ENCODE measurements at regions of chr1 and their contacts with region 1.

Region 1: DNA sequence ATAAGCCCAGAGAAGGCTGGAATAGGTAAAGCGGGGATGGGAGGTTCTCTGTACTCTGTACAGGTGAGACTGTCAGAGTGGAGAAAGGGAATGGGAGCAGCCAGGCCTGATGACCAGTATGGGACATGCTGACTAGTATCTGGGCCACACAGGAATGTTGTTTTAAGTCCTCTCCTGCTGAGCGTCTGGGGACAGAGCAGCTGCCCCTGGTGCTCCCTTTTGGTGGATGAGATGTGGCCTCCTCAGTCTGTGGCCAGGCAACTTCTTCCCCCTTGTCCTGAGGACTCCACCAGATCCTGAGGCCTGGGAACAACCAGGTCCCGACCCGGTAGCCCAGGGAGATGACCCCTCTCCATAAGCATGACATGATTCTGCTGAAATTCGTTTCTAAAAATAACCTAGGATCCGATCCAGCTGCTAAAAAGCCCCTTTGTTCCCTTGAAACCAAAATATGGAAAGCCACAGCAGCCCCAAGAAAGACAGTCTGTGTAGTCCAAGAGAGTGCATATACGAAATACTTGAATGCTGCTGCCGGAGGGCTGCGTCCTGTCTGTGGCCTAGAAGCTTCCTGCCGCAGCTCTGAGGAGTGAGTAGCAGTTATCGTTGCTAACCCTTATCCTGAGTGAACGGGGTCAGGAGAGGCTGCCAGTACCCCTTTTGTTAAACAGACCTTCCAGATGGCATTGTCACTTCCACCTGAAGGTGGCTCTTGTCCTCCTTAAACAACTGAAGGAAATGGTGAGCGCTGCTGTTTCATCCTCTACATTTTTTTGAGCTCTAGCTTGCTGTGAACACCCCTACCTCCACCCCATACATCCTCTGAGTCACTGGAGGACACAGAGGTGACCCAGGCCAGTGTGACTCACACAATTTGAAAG is 47.2 kb downstream of the ATP2B4 start:
- DNase-seq: peak; percentile 84
- H3K4me3 Mint-ChIP-seq: peak overlapping the region; percentile 46
- H3K27ac Mint-ChIP-seq: peak overlapping the region; percentile 90
- H3K4me1 Mint-ChIP-seq: peaks cover 62% of the 10 kb centered on the region
- H3K27me3 Mint-ChIP-seq: no peaks in the 10 kb centered on the region

Region 2: GRCh38 chr1:203663294-203663693 is 10.5 kb before region 1 on chr1:
- CTCF ChIA-PET with region 1: interaction called, 9 read pairs
- POLR2A ChIA-PET with region 1: interaction called, 8 read pairs
- intact Hi-C with region 1: loop called (anchors 1 kb)
- DNase-seq: peak; percentile 60
- H3K4me3 Mint-ChIP-seq: no peak overlapping the region
- H3K27ac Mint-ChIP-seq: peak overlapping the region; percentile 73
- H3K4me1 Mint-ChIP-seq: peaks cover 68% of the 10 kb centered on the region
- H3K27me3 Mint-ChIP-seq: no peaks in the 10 kb centered on the region

Region 3: DNA sequence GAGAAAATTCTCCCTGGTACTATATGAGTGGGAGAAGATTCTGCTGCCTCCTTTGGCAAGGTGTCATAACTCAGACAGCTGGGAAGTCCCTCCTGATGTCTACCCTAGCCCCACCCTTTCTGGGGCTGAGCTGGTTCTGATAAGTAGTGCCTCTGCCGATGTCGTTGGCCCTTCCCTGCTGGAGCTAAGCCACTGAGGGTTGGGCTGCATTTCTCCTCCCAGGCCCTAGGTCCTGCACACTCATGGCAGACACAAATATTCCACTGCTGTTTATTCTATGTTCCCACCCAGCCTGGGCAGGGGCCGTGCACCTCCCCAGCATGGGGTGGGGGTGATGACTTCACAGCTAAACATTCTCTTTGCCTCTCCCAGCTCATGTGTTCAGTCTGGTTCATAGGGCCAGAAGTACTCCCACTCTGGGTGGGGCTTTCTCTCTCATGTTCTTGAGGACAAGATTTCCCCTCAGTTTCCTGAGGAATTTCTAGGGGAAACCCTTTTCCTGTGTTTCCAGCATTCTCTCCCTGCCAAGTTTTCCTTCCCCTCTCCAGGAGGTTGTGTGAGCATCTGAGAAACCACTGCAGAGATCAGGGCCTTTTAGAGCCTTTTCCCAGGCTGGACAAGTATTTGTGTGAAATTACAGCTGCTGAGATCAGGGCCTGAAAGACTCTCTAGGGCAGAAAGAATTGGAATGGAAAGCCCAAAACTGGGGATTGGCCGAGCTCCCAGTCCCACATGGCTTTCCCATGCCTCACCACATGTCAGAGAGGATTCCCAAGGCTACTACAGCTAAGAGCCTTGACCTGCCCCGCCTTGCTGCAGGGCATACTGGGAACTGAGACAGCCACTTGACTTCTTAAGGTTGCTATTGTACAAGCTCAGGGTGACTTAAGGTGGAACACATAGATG is 19.0 kb after region 1 on chr1:
- CTCF ChIA-PET with region 1: interaction called, 13 read pairs
- POLR2A ChIA-PET with region 1: no interaction called
- intact Hi-C with region 1: loop called (anchors 1 kb)
- DNase-seq: peak; percentile 48
- H3K4me3 Mint-ChIP-seq: no peak overlapping the region
- H3K27ac Mint-ChIP-seq: peak overlapping the region; percentile 78
- H3K4me1 Mint-ChIP-seq: peaks cover 46% of the 10 kb centered on the region
- H3K27me3 Mint-ChIP-seq: no peaks in the 10 kb centered on the region

Measured in activated CD4-positive, alpha-beta memory T cell treated with anti-CD3 and anti-CD28 coated beads for 36 hours (primary cell).